PC-3 (cell line): ENCODE measurements at regions of chr5 and their contacts with region 1.

Region 1: GRCh38 chr5:52799983-52800393 is 12.3 kb downstream of the ITGA1 start:
- DNase-seq: peak; percentile 94
- ATAC-seq: peak; percentile 70
- H3K4me3 ChIP-seq: peak overlapping the region; percentile 77
- H3K27ac ChIP-seq: peak overlapping the region; percentile 99
- H3K4me1 ChIP-seq: peaks cover 25% of the 10 kb centered on the region
- H3K27me3 ChIP-seq: no peaks in the 10 kb centered on the region
- CTCF ChIP-seq: no peak

Region 2: DNA sequence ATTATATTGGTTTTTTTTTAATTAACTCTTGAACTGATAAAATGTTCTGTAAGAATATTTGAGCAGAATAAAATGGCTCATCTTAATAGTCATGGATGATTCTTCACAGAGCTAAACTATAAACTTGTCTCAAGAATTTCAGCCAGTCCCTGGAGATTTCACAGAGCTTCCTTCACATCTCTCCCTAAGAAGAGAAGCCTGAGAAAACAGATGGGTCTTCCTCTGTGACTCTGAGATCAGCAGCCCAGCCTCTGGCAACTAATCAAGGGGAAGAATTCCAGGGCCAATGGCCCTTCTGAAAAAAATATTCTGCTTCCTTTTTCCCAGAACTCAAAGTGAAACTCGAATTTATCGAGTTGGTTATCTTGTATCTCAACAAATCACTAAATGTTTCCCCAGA is 134.4 kb before region 1 on chr5:
- CTCF ChIA-PET with region 1: interaction called, 12 read pairs
- POLR2A ChIA-PET with region 1: interaction called, 8 read pairs
- intact Hi-C with region 1: no loop called
- DNase-seq: no peak
- ATAC-seq: no peak
- H3K4me3 ChIP-seq: no peak overlapping the region
- H3K27ac ChIP-seq: no peak overlapping the region
- H3K4me1 ChIP-seq: no peaks in the 10 kb centered on the region
- H3K27me3 ChIP-seq: peaks cover 25% of the 10 kb centered on the region
- CTCF ChIP-seq: no peak

Region 3: DNA sequence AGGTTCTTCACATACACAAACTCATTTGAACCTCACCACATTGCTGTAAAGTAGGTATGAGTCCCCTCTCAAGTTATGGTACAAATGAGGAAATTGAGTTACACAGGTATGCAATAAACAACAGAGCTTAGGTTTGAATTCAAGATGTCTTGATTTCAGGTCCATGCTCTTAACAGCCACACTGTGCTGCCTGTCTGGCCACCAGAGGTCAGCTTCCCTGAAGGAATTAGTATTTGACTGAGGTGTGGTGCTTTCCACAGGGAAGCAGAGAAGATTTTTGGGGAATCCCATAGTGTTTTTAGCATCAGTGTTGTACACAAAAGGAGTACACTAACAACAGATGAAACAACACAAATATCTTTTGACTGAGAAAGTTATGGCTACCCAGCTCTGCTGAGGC is 106.7 kb before region 1 on chr5:
- CTCF ChIA-PET with region 1: interaction called, 4 read pairs
- POLR2A ChIA-PET with region 1: no interaction called
- intact Hi-C with region 1: loop called (anchors 5 kb)
- DNase-seq: peak; percentile 49
- ATAC-seq: peak; percentile 83
- H3K4me3 ChIP-seq: no peak overlapping the region
- H3K27ac ChIP-seq: no peak overlapping the region
- H3K4me1 ChIP-seq: peaks cover 6% of the 10 kb centered on the region; the same call in 1 of the 2 replicates
- H3K27me3 ChIP-seq: peaks cover 3% of the 10 kb centered on the region; the same call in 1 of the 2 replicates
- CTCF ChIP-seq: peak; percentile 79

Region 4: DNA sequence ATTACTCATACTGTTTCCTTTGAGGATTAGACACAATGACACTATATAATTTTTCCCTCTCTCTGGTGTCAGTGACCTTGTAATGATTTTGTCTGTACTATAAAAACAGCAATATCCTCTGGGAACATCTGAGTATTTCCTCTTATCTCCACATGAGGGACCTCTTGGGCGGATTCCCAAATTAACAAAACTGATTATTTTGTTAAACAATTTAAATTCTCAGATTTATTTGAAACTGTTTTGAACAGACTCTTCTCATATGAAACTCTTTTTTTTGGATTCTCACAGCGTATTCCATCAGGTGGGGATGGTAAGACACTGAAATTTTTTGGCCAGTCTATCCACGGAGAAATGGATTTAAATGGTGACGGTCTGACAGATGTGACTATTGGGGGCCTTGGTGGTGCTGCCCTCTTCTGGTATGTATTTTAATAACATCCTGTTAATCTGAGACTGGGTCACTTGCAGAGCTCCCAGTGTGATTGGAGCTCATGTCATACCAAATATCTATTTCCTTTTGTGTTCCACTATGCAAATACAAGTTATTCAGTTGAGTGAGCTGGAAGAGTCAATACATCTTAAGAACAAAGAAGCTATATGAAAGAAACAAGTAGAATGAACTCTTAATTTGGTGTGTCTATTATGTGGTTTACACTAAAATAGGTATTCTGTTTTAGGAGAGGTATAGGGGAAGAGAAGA is 115.3 kb after region 1 on chr5:
- CTCF ChIA-PET with region 1: interaction called, 7 read pairs
- POLR2A ChIA-PET with region 1: no interaction called
- intact Hi-C with region 1: loop called (anchors 1 kb)
- DNase-seq: peak; percentile 76
- ATAC-seq: peak; percentile 97
- H3K4me3 ChIP-seq: peak overlapping the region; percentile 55
- H3K27ac ChIP-seq: 0 out of 2 replicates have a peak overlapping the region, but pooled peaks have one; percentile 14
- H3K4me1 ChIP-seq: no peaks in the 10 kb centered on the region
- H3K27me3 ChIP-seq: no peaks in the 10 kb centered on the region
- CTCF ChIP-seq: peak; percentile 89